Activated B cell treated with CpG ODN at 0.5 μM for 24 hours (primary cell): ENCODE measurements at regions of chr3 and their contacts with region 1.

Region 1: DNA sequence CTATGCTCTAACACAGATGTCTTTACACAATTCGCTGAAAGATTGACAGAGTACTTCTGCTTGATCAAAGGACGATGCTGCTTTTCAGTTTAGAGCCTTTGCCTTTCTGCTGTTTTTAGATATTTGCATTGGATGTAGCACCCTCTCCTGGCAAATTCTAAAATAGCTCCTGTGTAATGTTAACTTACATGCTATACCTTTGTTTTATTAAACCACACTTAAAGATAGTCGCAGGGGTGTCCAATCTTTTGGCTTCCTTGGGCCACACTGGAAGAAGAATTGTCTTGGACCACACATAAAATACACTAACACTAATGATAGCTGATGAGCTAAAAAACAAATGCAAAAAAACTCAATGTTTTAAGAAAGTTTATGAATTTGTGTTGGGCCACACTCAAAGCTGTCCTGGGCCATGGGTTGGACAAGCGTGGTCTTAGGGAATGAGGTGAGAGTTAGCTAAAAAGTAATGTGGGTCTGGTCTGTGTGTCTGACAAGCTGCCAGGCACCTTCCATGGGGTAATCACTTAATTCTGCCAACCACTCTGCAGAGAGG is 62.9 kb downstream of the ATG7 start:
- DNase-seq: no peak
- ATAC-seq: peak; percentile 77
- H3K4me3 Mint-ChIP-seq: no peak overlapping the region
- H3K27ac Mint-ChIP-seq: no peak overlapping the region
- H3K4me1 Mint-ChIP-seq: peaks cover 2% of the 10 kb centered on the region
- H3K27me3 Mint-ChIP-seq: no peaks in the 10 kb centered on the region
- CTCF ChIP-seq: no peak

Region 2: DNA sequence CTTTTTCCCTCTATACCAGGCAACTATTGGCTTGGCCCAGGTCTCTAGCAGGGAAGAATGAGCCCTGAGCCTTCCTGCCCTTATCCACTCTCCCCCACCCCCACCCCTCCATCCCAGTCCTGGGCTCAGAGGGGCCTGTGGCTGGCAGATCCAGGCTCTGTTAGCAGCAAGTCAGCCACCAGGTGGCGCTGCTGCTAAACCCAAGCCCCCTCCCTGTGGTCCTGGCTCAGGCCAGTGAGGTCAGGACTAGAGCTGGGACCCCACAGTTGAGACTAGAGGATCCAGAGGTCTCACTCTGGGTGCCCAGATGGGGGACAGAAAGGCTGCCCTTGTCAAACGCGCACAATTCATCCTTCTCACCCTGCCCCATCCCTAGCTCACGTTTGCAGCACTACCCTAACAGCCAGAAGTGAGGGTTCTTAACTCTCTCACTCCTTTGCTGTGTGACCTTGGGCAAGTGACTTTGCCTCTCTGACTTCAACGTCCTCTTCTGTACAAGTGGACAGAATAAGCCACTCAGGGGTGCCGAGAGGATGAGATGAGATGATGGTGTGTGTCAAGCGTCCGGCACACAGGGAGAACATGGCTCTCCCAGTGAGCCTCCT is 389.3 kb before region 1 on chr3:
- CTCF ChIA-PET with region 1: interaction called, 5 read pairs
- POLR2A ChIA-PET with region 1: no interaction called
- intact Hi-C with region 1: loop called (anchors 10 kb)
- DNase-seq: peak; percentile 37
- ATAC-seq: no peak
- H3K4me3 Mint-ChIP-seq: no peak overlapping the region
- H3K27ac Mint-ChIP-seq: no peak overlapping the region
- H3K4me1 Mint-ChIP-seq: no peaks in the 10 kb centered on the region
- H3K27me3 Mint-ChIP-seq: peaks cover 13% of the 10 kb centered on the region
- CTCF ChIP-seq: no peak

Region 3: GRCh38 chr3:11164607-11165006 is 170.5 kb before region 1 on chr3:
- CTCF ChIA-PET with region 1: no interaction called
- POLR2A ChIA-PET with region 1: no interaction called
- intact Hi-C with region 1: loop called (anchors 5 kb)
- DNase-seq: no peak
- ATAC-seq: no peak
- H3K4me3 Mint-ChIP-seq: no peak overlapping the region
- H3K27ac Mint-ChIP-seq: no peak overlapping the region
- H3K4me1 Mint-ChIP-seq: peaks cover 3% of the 10 kb centered on the region
- H3K27me3 Mint-ChIP-seq: peaks cover 20% of the 10 kb centered on the region
- CTCF ChIP-seq: no peak

Region 4: DNA sequence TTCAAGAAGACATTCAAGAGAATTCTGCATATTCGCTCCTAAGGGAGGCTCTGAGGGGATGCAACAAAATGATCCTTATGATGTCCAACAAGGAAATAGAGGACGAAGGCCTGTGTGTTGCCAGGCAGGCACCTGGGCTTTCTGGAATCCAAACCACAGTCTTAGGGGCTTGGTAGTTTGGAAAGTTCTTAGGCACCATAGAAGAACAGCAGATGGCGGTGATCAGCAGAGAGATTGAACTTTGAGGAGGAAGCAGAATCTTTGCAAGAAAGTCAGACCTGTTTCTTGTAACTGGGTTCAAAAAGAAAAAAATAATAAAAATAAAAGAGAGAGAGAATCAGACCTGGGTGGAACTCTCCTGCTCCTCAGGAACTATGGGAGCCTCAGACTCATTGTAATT is 74.7 kb before region 1 on chr3:
- CTCF ChIA-PET with region 1: interaction called, 22 read pairs
- POLR2A ChIA-PET with region 1: no interaction called
- intact Hi-C with region 1: loop called (anchors 1 kb)
- DNase-seq: no peak
- ATAC-seq: no peak
- H3K4me3 Mint-ChIP-seq: no peak overlapping the region
- H3K27ac Mint-ChIP-seq: no peak overlapping the region
- H3K4me1 Mint-ChIP-seq: no peaks in the 10 kb centered on the region
- H3K27me3 Mint-ChIP-seq: peaks cover 18% of the 10 kb centered on the region
- CTCF ChIP-seq: no peak

Region 5: DNA sequence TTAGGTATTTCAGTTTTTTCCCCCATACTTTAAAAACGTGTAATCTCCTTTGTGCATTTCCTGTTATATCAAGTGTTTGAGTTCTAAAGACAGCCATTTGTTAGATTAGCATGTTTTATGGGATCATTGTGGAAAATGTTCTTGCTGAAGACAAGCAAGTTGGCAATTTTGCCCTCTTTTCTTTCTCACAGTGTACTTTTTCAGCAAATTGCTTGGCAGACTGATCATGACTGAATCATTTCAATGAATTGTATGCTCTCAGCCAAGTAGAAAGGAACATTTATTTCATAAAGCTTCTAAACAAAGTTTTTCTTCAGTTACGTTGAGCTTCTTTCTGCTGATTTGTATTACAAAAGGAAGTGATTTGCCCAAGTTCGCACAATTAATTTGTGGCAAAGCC is 11.3 kb before region 1 on chr3:
- CTCF ChIA-PET with region 1: interaction called, 13 read pairs
- POLR2A ChIA-PET with region 1: no interaction called
- intact Hi-C with region 1: no loop called
- DNase-seq: no peak
- ATAC-seq: no peak
- H3K4me3 Mint-ChIP-seq: no peak overlapping the region
- H3K27ac Mint-ChIP-seq: no peak overlapping the region
- H3K4me1 Mint-ChIP-seq: no peaks in the 10 kb centered on the region
- H3K27me3 Mint-ChIP-seq: no peaks in the 10 kb centered on the region
- CTCF ChIP-seq: no peak